RWPE1 (cell line): ENCODE measurements at regions of chr11 and their contacts with region 1.

Region 1: GRCh38 chr11:118935376-118935775 is 9.7 kb upstream of the BCL9L start:
- DNase-seq: no peak
- H3K27ac ChIP-seq: no peak overlapping the region
- CTCF ChIP-seq: no peak

Region 2: GRCh38 chr11:118735203-118735602 is 200.2 kb before region 1 on chr11:
- CTCF ChIA-PET with region 1: no interaction called
- POLR2A ChIA-PET with region 1: interaction called, 11 read pairs
- DNase-seq: no peak
- H3K27ac ChIP-seq: no peak overlapping the region
- CTCF ChIP-seq: no peak